ENCODE measurements at regions of chr1 and their contacts with region 1.

Region 1: GRCh38 chr1:181189691-181190363 is 101.3 kb downstream of the IER5 start:
- DNase-seq: peak; percentile 78
- H3K4me3 Mint-ChIP-seq: no peak overlapping the region
- H3K27ac Mint-ChIP-seq: no peak overlapping the region
- H3K4me1 Mint-ChIP-seq: peaks cover 3% of the 10 kb centered on the region
- H3K27me3 Mint-ChIP-seq: peaks cover 21% of the 10 kb centered on the region

Region 2: GRCh38 chr1:181397845-181398244 is 208.0 kb after region 1 on chr1:
- CTCF ChIA-PET with region 1: interaction called, 10 read pairs
- POLR2A ChIA-PET with region 1: no interaction called
- DNase-seq: peak; percentile 46
- H3K4me3 Mint-ChIP-seq: peak overlapping the region; percentile 56
- H3K27ac Mint-ChIP-seq: peak overlapping the region; percentile 92
- H3K4me1 Mint-ChIP-seq: peaks cover 36% of the 10 kb centered on the region
- H3K27me3 Mint-ChIP-seq: no peaks in the 10 kb centered on the region

Region 3: GRCh38 chr1:181424786-181425403 is 235.1 kb after region 1 on chr1:
- CTCF ChIA-PET with region 1: interaction called, 53 read pairs
- POLR2A ChIA-PET with region 1: no interaction called
- DNase-seq: peak; percentile 80
- H3K4me3 Mint-ChIP-seq: no peak overlapping the region
- H3K27ac Mint-ChIP-seq: no peak overlapping the region
- H3K4me1 Mint-ChIP-seq: peaks cover 4% of the 10 kb centered on the region
- H3K27me3 Mint-ChIP-seq: peaks cover 9% of the 10 kb centered on the region

Region 4: DNA sequence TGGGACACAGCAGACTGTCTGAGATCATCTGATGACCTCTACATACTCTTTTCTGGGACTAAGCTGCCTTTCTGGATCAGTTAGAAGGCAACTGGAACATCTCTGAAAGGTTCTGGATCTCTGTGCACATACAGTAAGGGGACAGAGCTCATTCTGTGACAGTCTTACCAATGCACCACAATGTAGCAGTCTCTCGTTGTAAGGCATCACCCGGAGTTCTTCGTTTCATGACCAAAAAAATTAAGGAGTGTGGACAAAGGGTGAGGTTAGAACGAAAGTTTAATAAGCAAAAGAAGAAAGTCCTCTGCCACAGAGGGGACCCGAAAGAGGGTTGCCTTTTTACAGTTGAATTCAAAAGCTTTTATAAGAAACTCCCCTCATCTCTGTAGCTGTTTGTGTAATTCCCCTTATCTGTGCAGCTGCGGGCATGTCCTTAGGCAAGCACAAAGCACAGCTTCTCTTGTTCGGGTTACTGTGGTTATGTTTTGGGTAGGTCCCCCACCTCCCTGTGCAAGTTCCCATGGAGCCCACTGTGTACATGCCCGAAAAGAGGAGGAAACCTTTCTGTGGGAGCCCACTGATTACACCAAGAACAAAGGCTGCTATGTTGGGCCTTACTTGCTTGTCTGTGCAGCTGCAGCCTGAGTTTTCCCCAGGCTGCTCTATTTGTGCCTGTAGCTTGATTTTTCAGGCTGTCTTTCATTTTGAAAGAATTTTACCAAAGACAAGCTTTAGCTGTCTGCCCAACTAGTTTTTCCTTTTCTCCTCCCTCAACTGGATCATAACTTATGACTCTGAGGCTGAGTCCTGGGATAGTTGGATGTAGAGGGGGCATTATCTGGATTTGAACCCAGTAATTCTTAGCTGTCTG is 240.4 kb after region 1 on chr1:
- CTCF ChIA-PET with region 1: interaction called, 53 read pairs
- POLR2A ChIA-PET with region 1: no interaction called
- DNase-seq: no peak
- H3K4me3 Mint-ChIP-seq: no peak overlapping the region
- H3K27ac Mint-ChIP-seq: no peak overlapping the region
- H3K4me1 Mint-ChIP-seq: no peaks in the 10 kb centered on the region
- H3K27me3 Mint-ChIP-seq: peaks cover 21% of the 10 kb centered on the region